ENCODE measurements at regions of chr12 and their contacts with region 1.

Region 1: DNA sequence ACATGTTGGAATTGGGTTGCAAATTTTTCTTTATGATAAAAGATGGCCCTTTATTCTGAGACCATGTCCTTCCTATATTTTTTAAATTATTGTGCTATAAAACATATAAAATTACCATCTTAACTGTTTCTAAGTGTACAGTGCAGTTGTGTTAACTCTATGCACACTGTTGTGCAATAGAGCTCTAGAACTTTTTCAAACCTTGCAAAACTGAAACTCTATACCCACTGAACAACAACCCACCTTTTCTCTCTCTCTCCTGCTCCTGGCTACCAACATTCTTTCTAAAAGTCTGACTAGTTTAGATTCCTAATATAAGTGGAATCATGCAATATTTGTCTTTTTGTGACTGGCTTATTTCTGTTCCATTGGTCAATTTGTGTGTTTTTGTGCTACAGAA is 7.8 kb upstream of the CPM start:
- DNase-seq: no peak
- H3K4me3 ChIP-seq: no peak overlapping the region
- H3K4me3 Mint-ChIP-seq: no peak overlapping the region
- H3K27ac Mint-ChIP-seq: no peak overlapping the region
- H3K4me1 ChIP-seq: peaks cover 43% of the 10 kb centered on the region
- H3K4me1 Mint-ChIP-seq: peaks cover 21% of the 10 kb centered on the region
- H3K27me3 ChIP-seq: no peaks in the 10 kb centered on the region
- H3K27me3 Mint-ChIP-seq: no peaks in the 10 kb centered on the region
- CTCF ChIP-seq: no peak

Region 2: GRCh38 chr12:68866950-68867349 is 73.8 kb before region 1 on chr12:
- CTCF ChIA-PET with region 1: no interaction called
- POLR2A ChIA-PET with region 1: no interaction called
- intact Hi-C with region 1: no loop called
- DNase-seq: no peak
- H3K4me3 ChIP-seq: no peak overlapping the region
- H3K4me3 Mint-ChIP-seq: no peak overlapping the region
- H3K27ac Mint-ChIP-seq: no peak overlapping the region
- H3K4me1 ChIP-seq: no peaks in the 10 kb centered on the region
- H3K4me1 Mint-ChIP-seq: no peaks in the 10 kb centered on the region
- H3K27me3 ChIP-seq: no peaks in the 10 kb centered on the region
- H3K27me3 Mint-ChIP-seq: no peaks in the 10 kb centered on the region
- CTCF ChIP-seq: no peak

Region 3: DNA sequence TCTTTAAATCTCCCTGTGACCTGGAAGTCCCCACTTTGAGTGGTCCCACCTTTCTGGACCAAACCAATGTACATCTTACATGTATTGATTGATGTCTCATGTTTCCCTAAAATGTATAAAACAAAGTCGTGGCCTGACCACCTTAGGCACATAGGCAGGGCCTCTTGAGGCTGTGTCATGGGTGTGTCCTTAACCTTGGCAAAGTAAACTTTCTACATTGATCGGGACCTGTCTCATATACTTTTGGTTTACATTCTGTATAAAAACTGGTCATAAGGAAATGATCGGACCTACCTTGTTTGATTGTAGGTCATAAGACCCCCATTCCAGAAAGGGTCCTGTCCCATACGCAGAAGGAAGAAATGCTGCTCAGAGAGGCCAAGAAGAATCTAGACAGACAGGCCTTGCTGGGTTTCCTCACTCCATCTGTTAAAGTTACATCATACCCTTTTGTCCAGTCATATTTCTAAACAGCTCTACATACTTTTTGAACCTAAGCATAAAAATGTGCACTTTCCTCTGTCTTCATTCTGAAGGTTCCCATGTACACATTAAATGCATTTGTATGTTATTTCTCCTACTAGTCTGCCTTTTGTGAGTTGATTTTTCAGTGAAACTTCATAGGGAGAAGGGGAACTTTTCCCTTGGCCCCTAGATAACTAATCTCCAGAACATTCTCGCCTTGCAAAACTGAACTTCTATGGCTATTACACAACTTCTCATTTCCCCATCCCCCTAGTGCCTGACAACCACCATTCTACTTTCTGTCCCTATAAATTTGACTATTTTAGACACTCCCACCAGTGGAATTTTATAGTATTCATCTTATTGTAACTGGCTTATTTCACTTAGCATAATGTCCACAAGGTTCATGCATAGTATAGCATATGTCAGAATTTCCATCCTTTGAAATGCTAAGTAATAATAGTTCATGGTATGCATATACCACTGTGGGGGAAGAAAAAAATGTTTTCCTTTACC is 22.4 kb after region 1 on chr12:
- CTCF ChIA-PET with region 1: no interaction called
- POLR2A ChIA-PET with region 1: no interaction called
- intact Hi-C with region 1: loop called (anchors 2 kb)
- DNase-seq: peak in 1 of 2 experiments; percentile 39
- H3K4me3 ChIP-seq: no peak overlapping the region
- H3K4me3 Mint-ChIP-seq: peak overlapping the region; percentile 35
- H3K27ac Mint-ChIP-seq: peak overlapping the region; percentile 56
- H3K4me1 ChIP-seq: peaks cover 19% of the 10 kb centered on the region
- H3K4me1 Mint-ChIP-seq: peaks cover 32% of the 10 kb centered on the region
- H3K27me3 ChIP-seq: no peaks in the 10 kb centered on the region
- H3K27me3 Mint-ChIP-seq: no peaks in the 10 kb centered on the region
- CTCF ChIP-seq: no peak

Region 4: GRCh38 chr12:69284131-69284530 is 343.4 kb after region 1 on chr12:
- CTCF ChIA-PET with region 1: no interaction called
- POLR2A ChIA-PET with region 1: no interaction called
- intact Hi-C with region 1: no loop called
- DNase-seq: peak in 1 of 2 experiments; percentile 47
- H3K4me3 ChIP-seq: no peak overlapping the region
- H3K4me3 Mint-ChIP-seq: no peak overlapping the region
- H3K27ac Mint-ChIP-seq: no peak overlapping the region
- H3K4me1 ChIP-seq: no peaks in the 10 kb centered on the region
- H3K4me1 Mint-ChIP-seq: no peaks in the 10 kb centered on the region
- H3K27me3 ChIP-seq: no peaks in the 10 kb centered on the region
- H3K27me3 Mint-ChIP-seq: no peaks in the 10 kb centered on the region
- CTCF ChIP-seq: no peak

Measured in Caco-2 (cell line).